ENCODE measurements at regions of chr1 and their contacts with region 1.

Region 1: DNA sequence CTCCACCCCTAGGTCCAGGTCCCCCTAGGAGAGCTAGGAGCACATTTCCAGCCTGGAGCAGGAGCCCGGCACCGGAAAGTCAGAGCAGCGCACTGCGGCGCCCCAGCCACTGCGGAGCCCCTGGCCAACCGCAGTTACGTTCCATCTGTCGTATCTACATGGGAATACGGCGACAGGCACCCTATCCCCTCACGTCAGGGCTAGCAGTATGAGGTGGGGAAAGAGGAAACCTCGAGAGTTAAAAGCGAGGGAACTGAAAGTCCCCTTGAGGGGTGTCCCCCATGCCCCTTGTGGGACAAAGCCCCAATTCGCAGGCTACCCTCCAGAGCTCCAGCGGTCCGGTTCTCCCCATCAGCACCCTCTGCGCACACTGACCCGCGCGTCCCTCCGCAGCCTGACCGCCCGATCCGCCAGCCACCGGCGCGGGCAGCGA is 995 bp downstream of the COLGALT2 start:
- DNase-seq: no peak
- H3K4me3 ChIP-seq: peak overlapping the region; percentile 44 to 54
- H3K27ac ChIP-seq: peak overlapping the region; percentile 59 to 65
- H3K4me1 ChIP-seq: no peaks in the 10 kb centered on the region
- H3K27me3 ChIP-seq: no peaks in the 10 kb centered on the region
- CTCF ChIP-seq: no peak
- POLR2A ChIP-seq: no peak

Region 2: DNA sequence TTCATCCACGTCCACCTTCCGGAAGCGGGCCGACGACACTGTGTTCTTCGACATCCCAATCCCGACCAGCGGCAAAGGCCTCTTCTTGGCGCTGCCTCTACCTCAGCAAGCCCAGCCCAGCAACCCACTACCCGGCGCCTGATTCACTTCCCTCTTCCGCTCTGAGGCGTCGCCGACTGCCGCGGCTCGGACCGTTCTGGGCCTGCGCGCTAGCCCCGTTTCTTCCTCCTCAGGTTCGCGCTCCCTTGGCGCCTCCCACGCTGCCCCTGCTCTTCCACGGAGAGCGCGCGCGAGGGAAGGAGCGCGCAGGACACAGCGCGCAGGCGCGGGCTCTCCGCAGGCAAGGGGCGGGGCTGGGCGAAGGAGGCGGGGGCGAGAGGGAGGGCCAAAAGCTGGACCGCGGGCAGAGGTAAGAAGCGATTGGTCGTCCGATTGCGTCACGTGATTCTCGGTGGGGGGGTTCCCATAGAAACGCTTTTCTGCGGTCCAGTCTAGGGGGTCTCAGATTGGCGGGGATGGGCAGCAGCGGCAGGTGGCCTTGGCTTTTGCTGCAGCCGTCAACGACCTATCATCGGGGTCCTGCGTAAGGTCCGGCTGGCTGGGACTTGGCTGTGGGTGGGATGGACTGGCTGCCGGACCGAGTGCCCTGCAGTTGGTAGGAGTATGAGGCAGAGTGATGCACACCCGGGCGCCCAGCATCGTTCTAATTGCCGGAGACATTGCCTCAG is 400.8 kb before region 1 on chr1 and contains the start of gene ARPC5:
- intact Hi-C with region 1: loop called (anchors 10 kb)
- DNase-seq: peak; percentile 94
- H3K4me3 ChIP-seq: peak within 1 kb of the TSS; percentile 83 to 93
- H3K27ac ChIP-seq: peak within 1 kb of the TSS; percentile 87 to 90
- H3K4me1 ChIP-seq: no peaks in the 10 kb centered on the region
- H3K27me3 ChIP-seq: no peaks in the 10 kb centered on the region
- CTCF ChIP-seq: peak in 1 of 4 experiments; percentile 18
- POLR2A ChIP-seq: peak; percentile 89
- total RNA-seq, gene ARPC5: 62.9 to 92.8 TPM

Region 3: DNA sequence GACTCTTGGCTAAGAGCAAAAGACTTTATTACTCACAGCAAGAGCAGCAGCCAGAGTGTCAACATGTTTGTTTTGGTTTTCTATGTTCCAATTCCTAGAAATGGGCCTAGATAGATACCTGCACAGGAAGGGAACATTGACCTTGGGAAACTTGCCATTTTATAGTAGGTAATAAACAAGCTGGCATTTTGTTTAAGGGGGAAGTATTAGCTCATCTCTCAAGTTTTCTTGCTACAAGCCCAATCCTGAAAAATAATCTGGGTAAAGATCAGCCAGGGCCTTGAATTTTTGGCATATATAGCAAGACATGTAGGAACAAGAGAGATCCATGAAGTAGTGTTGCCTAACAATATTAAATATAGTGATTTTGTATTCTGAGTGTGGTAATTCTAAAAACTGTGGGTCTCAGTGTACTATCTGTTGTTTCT is 283.1 kb before region 1 on chr1:
- intact Hi-C with region 1: no loop called
- DNase-seq: no peak
- H3K4me3 ChIP-seq: no peak overlapping the region
- H3K27ac ChIP-seq: no peak overlapping the region
- H3K4me1 ChIP-seq: no peaks in the 10 kb centered on the region
- H3K27me3 ChIP-seq: no peaks in the 10 kb centered on the region
- CTCF ChIP-seq: no peak
- POLR2A ChIP-seq: no peak

Region 4: DNA sequence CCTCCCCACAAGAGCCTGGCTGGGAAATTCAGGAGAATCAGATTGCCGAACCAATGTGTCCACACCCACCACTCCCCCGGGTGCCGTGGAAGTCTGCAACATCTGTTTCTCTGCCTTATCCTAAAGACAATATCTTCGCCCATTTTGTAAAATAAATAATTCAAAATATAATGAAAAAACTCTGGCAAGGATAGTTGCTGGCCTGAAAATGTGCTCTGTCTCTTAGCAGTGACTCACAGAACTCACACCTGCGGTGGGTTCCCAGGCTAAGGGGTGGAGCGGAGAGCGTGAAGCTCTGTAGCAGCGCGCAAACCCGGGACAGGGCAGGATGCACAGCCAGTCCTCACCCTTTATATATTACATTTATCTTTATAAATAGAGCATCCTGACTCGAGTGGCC is 98.9 kb before region 1 on chr1:
- intact Hi-C with region 1: loop called (anchors 5 kb)
- DNase-seq: no peak
- H3K4me3 ChIP-seq: no peak overlapping the region
- H3K27ac ChIP-seq: no peak overlapping the region
- H3K4me1 ChIP-seq: no peaks in the 10 kb centered on the region
- H3K27me3 ChIP-seq: no peaks in the 10 kb centered on the region
- CTCF ChIP-seq: no peak
- POLR2A ChIP-seq: no peak

Region 5: GRCh38 chr1:184101141-184101540 is 64.6 kb after region 1 on chr1:
- intact Hi-C with region 1: no loop called
- DNase-seq: no peak
- H3K4me3 ChIP-seq: no peak overlapping the region
- H3K27ac ChIP-seq: no peak overlapping the region
- H3K4me1 ChIP-seq: no peaks in the 10 kb centered on the region
- H3K27me3 ChIP-seq: no peaks in the 10 kb centered on the region
- CTCF ChIP-seq: no peak
- POLR2A ChIP-seq: no peak

Region 6: DNA sequence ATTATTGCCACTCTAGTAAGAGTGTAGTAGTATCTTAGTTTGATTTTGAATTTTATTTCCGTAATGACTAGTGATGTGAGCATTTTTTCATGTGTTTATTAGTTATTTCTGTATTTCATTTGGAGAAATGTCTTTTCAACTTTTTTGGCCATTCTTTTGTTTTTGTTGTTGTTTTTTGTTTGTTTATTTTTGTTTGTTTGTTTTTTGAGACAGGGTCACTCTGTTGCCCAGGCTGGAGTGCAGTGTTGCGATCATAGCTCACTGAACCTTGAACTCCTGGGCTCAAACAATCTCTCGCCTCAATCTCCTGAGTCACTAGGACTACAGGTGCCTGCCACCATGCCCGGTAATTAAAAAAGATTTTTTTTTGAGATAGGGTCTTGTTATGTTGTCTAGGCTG is 91.0 kb after region 1 on chr1:
- intact Hi-C with region 1: no loop called
- DNase-seq: no peak
- H3K4me3 ChIP-seq: no peak overlapping the region
- H3K27ac ChIP-seq: no peak overlapping the region
- H3K4me1 ChIP-seq: no peaks in the 10 kb centered on the region
- H3K27me3 ChIP-seq: no peaks in the 10 kb centered on the region
- CTCF ChIP-seq: no peak
- POLR2A ChIP-seq: no peak